ENCODE measurements at regions of chr21 and their contacts with region 1.

Region 1: GRCh38 chr21:26850108-26850643 is 5.0 kb upstream of the ADAMTS1 start:
- DNase-seq: no peak
- H3K4me3 ChIP-seq: no peak overlapping the region
- H3K27ac ChIP-seq: no peak overlapping the region
- H3K4me1 ChIP-seq: peaks cover 0 to 10% (median 3%) of the 10 kb centered on the region in 4 donors
- H3K27me3 ChIP-seq: no peaks in the 10 kb centered on the region
- CTCF ChIP-seq: peak; percentile 71 to 92 (median 83)
- EP300 ChIP-seq: no peak
- POLR2A ChIP-seq: no peak

Region 2: GRCh38 chr21:27564684-27565301 is 714.6 kb after region 1 on chr21:
- intact Hi-C with region 1: loop called (anchors 5 kb)
- DNase-seq: no peak
- H3K4me3 ChIP-seq: no peak overlapping the region
- H3K27ac ChIP-seq: no peak overlapping the region
- H3K4me1 ChIP-seq: peaks cover 0 to 3% (median 2%) of the 10 kb centered on the region in 4 donors
- H3K27me3 ChIP-seq: no peaks in the 10 kb centered on the region
- CTCF ChIP-seq: peak in 3 of 4 experiments; percentile 24 to 49 (median 28)
- EP300 ChIP-seq: no peak
- POLR2A ChIP-seq: no peak

Region 3: GRCh38 chr21:28336314-28336713 is 1486.1 kb after region 1 on chr21:
- intact Hi-C with region 1: loop called (anchors 2 kb)
- DNase-seq: no peak
- H3K4me3 ChIP-seq: no peak overlapping the region
- H3K27ac ChIP-seq: no peak overlapping the region
- H3K4me1 ChIP-seq: peaks cover 0 to 10% (median 3%) of the 10 kb centered on the region in 4 donors
- H3K27me3 ChIP-seq: no peaks in the 10 kb centered on the region
- CTCF ChIP-seq: peak in 3 of 4 experiments; percentile 28 to 40 (median 34)
- EP300 ChIP-seq: no peak
- POLR2A ChIP-seq: no peak